ENCODE measurements at regions of chr14 and their contacts with region 1.

Region 1: DNA sequence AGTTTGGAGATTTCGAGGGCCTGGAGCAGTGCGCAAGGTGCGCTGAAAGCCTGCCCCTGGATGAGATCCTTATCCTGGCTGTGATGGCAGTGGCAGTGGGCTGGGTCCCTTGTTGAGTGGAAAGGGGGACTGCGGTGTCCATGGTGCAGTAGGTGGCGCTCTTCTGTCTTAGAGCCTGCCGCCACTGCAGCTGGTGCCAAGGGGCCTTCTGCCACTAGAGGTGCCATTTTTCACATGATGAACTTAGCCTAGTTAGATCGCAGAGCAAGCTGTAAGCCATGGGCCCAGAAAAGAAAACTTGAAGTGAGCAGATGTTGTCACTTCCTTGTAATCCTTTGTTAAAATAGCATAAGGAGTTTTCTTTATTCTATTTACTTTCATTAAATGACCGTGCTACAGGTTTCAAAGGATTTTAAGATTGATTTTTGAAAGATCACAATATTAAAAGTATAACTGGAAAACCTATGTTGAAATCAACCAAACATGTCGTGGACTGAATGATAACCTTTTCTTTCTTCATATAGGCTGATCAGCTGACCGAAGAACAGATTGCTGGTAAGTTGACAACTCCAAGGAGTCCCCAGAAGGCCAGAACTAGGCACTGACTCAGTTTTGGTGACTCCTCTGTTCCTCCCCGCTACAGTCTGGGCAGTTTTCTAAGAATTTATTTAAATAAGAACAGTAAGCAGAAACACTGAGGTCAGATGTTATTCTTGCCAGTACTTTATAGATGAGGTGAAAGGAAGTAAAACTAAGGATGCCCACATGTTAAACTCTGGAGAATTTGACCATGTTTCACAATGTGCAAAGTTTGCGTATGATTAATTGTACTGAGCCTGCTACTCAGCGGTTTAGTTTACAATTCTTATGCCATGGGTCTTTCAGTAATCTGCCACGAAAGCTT is 3.0 kb downstream of the CALM1 start:
- DNase-seq: peak; percentile 86
- H3K4me3 Mint-ChIP-seq: peak overlapping the region; percentile 85
- H3K27ac Mint-ChIP-seq: no peak overlapping the region
- H3K4me1 Mint-ChIP-seq: peaks cover 11% of the 10 kb centered on the region
- H3K27me3 Mint-ChIP-seq: no peaks in the 10 kb centered on the region
- CTCF ChIP-seq: peak; percentile 95

Region 2: GRCh38 chr14:90301668-90302090 is 98.1 kb before region 1 on chr14:
- CTCF ChIA-PET with region 1: interaction called, 11 read pairs
- intact Hi-C with region 1: loop called (anchors 2 kb)
- DNase-seq: no peak
- H3K4me3 Mint-ChIP-seq: no peak overlapping the region
- H3K27ac Mint-ChIP-seq: no peak overlapping the region
- H3K4me1 Mint-ChIP-seq: no peaks in the 10 kb centered on the region
- H3K27me3 Mint-ChIP-seq: no peaks in the 10 kb centered on the region
- CTCF ChIP-seq: no peak

Region 3: DNA sequence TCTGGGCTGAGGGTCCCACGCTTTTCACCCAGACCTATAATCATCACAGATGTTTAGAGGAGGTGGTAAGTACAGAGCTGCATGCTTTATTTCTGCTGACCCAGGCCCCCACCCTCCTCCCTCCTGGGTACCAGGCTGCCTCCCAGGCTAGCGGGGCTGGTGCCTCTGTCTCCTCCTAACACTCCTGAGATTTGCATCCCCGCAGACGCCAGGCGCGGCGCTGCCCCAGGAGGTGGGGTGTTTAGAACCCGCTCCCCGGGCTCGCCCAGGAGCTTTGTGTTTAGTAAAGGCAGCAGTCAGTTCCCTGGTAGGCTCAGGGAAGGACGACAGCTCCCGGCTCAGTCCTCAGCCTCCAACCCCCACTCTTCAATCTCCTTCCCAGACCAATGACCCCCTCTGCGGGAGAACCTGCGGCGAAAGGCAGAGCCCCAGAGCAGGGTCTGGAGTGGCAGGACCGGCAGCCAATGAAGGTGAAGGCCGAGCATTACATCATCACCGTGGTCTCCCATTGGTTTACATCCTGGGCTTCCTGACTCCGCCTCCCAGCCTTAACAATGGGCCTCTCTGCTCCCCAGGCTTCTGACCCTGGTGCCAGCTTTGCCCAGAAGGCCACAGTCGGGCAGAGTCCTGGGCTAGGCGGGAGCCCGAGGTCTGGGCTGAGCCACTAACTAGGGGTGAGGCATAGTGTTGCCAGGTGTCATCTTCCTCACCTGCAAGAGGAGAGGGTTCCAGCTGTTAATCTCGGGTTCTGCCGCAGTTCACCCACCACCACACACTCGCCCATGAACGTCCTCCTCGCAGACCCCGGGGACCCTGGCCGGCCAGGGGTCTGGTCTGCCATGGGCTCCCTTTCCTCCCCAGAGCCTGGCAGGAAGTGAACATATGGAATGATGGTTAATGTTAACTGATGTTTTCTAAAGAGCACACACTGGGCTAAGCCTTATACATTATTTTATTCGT is 54.5 kb after region 1 on chr14:
- CTCF ChIA-PET with region 1: no interaction called
- intact Hi-C with region 1: loop called (anchors 10 kb)
- DNase-seq: peak; percentile 95
- H3K4me3 Mint-ChIP-seq: peak overlapping the region; percentile 75
- H3K27ac Mint-ChIP-seq: peak overlapping the region; percentile 88
- H3K4me1 Mint-ChIP-seq: no peaks in the 10 kb centered on the region
- H3K27me3 Mint-ChIP-seq: no peaks in the 10 kb centered on the region
- CTCF ChIP-seq: no peak

Region 4: GRCh38 chr14:90513161-90514014 is 113.6 kb after region 1 on chr14:
- CTCF ChIA-PET with region 1: interaction called, 12 read pairs
- intact Hi-C with region 1: loop called (anchors 5 kb)
- DNase-seq: peak; percentile 96
- H3K4me3 Mint-ChIP-seq: peak overlapping the region; percentile 58
- H3K27ac Mint-ChIP-seq: peak overlapping the region; percentile 99
- H3K4me1 Mint-ChIP-seq: peaks cover 60% of the 10 kb centered on the region
- H3K27me3 Mint-ChIP-seq: no peaks in the 10 kb centered on the region
- CTCF ChIP-seq: no peak

Region 5: DNA sequence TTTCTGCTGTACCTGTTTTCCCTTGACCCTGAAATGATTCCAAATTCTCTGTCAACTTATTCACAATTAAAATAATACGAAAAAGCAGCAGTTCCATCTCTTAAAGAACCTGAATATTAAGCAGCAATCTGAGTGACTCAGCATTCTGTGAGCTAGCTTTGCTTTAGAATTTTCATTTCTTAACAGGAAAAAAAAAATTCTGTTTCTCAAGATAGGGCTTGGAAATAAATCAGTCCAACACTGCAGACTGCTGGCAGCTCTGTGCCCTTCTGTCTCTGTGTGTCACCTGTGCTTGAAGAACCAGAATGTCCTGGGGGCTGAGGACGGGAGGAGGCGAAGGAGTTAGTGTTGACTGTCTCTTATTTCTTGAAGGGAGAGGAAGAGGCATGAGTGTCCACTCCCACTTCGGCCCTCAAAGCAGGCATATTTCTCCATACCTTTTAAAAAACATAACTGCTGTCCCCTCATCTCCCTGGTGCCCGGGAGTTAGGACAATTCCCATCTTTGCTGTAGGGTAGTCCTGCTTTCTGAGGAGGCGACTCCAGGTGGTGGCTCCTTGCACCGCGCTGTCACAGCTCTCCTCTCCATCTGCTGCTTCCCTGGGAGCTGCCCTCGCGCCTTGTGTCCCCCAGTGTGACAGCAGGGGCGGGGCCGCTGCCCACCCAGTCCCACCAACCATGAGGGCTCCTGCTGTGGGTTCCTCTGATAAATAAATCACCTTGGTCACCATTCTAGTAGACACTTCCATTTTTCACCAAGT is 200.1 kb after region 1 on chr14:
- CTCF ChIA-PET with region 1: interaction called, 14 read pairs
- intact Hi-C with region 1: loop called (anchors 2 kb)
- DNase-seq: peak; percentile 14
- H3K4me3 Mint-ChIP-seq: no peak overlapping the region
- H3K27ac Mint-ChIP-seq: peak overlapping the region; percentile 72
- H3K4me1 Mint-ChIP-seq: no peaks in the 10 kb centered on the region
- H3K27me3 Mint-ChIP-seq: no peaks in the 10 kb centered on the region
- CTCF ChIP-seq: no peak

Region 6: GRCh38 chr14:90697577-90698206 is 297.9 kb after region 1 on chr14:
- CTCF ChIA-PET with region 1: interaction called, 23 read pairs
- intact Hi-C with region 1: loop called (anchors 1 kb)
- DNase-seq: peak; percentile 85
- H3K4me3 Mint-ChIP-seq: no peak overlapping the region
- H3K27ac Mint-ChIP-seq: no peak overlapping the region
- H3K4me1 Mint-ChIP-seq: no peaks in the 10 kb centered on the region
- H3K27me3 Mint-ChIP-seq: no peaks in the 10 kb centered on the region
- CTCF ChIP-seq: peak; percentile 76

Region 7: DNA sequence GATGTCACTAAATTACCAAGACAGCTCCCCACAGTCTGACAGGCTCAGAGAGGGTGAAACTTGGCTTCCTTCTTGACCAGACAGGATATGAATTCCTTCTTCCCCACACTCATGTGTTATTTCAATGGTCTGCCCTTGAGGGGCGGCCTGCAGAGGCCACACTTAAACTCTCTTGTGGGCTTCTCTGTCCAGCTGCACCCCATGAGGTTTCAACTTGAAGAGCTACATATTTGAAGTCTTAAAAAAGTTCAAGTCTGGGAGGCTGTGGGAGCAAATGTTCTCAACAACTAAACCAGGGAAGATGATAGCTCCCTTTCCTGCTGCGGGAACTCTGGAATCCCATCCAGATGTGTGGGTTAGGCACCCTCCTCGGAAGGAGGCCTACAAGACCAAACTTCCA is 318.1 kb after region 1 on chr14:
- CTCF ChIA-PET with region 1: no interaction called
- intact Hi-C with region 1: no loop called
- DNase-seq: no peak
- H3K4me3 Mint-ChIP-seq: no peak overlapping the region
- H3K27ac Mint-ChIP-seq: no peak overlapping the region
- H3K4me1 Mint-ChIP-seq: peaks cover 18% of the 10 kb centered on the region
- H3K27me3 Mint-ChIP-seq: no peaks in the 10 kb centered on the region
- CTCF ChIP-seq: no peak

Region 8: DNA sequence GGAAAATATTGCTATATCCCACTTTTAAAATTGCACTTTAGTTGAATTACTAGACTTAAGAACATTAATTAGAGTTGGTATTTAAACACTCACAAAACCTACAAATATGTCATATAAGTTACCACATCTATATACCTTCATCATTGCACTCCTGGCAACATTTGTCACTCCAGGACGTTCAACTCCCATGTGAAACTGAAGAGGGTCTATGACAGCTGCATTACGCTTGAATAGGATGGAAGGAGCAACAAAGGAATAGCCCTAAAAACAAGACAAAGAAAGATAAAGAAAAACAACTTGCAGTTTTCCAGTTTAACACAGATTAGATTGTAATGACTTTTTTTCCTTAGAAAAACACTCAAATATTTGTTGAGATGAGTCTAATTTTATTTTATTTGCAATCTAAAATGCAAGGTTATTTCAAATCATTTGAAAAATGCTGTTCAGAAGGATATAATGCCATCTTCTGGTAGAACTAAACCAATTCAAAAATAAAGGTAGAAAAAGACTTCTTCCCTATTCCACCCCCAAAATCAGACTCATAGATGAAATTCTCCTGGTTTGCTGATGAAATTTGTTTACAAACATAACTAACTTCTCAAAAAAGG is 500.8 kb after region 1 on chr14:
- CTCF ChIA-PET with region 1: no interaction called
- intact Hi-C with region 1: no loop called
- DNase-seq: no peak
- H3K4me3 Mint-ChIP-seq: no peak overlapping the region
- H3K27ac Mint-ChIP-seq: no peak overlapping the region
- H3K4me1 Mint-ChIP-seq: no peaks in the 10 kb centered on the region
- H3K27me3 Mint-ChIP-seq: no peaks in the 10 kb centered on the region
- CTCF ChIP-seq: no peak